ENCODE measurements at regions of chr19 and their contacts with region 1.

Region 1: DNA sequence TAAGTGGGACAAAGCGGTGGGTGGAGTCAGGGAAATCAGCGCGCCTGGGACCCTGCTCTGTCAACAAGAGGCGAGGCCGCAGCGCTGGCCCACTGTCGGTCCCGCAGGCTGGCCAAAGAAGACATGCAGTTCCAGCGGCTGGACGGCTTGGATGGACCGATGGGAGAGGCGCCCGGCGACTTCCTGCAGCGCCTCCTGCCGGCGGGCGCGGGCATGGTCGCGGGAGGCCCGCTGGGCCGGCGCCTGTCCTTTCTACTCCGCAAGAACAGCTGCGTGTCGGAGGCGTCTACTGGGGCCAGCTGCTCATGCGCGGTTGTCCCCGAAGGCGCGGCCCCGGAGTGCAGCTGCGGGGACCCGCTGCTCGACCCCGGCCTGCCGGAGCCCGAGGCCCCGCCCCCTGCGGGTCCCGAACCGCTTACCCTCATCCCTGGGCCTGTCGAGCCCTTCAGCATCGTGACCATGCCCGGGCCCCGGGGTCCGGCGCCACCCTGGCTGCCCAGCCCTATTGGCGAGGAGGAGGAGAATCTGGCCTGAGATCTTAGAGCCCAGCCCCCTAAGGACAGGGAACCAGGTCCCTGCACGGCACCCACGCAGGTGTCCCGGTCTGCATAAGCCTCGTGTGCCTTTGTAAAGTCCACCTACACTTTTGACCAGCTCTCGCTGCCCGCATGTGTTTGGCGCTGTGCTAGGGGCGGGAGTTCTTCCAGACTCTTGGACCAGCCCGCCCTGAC is 6.1 kb downstream of the BEST2 start:
- DNase-seq: peak; percentile 63
- H3K4me3 Mint-ChIP-seq: peak overlapping the region; percentile 32
- H3K27ac Mint-ChIP-seq: no peak overlapping the region
- H3K4me1 Mint-ChIP-seq: peaks cover 2% of the 10 kb centered on the region
- H3K27me3 Mint-ChIP-seq: peaks cover 17% of the 10 kb centered on the region

Region 2: DNA sequence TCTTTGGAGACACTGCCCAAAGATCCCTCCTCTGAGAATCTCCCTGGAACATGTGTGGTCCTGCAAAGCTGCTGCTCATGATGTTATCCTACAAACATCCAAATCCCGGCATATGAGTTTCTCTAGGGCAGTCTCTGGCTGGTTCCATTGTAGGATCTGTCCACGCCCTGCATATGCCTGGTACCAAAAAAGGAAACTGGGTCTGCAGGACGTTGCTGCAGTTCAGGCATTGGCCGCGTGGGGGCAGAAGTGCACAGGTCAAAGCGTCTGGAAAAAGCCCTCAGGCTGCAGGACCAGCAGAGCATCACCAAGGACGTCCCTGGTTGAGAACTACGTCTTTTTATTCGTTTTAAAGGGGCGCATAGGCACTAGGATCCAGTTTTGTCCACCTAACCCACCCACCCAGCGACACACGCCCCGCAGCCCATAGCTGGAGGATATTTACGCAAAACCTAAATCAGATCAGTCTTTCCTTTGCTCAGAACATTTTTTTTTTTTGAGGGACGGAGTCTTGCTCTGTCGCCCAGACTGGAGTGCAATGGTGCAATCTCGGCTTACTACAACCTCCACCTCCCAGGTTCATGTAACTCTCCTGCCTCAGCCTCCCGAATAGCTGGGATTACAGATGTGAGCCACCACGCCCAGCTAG is 193.6 kb before region 1 on chr19:
- CTCF ChIA-PET with region 1: interaction called, 5 read pairs
- intact Hi-C with region 1: loop called (anchors 2 kb)
- DNase-seq: peak; percentile 96
- H3K4me3 Mint-ChIP-seq: no peak overlapping the region
- H3K27ac Mint-ChIP-seq: no peak overlapping the region
- H3K4me1 Mint-ChIP-seq: peaks cover 4% of the 10 kb centered on the region
- H3K27me3 Mint-ChIP-seq: no peaks in the 10 kb centered on the region

Region 3: DNA sequence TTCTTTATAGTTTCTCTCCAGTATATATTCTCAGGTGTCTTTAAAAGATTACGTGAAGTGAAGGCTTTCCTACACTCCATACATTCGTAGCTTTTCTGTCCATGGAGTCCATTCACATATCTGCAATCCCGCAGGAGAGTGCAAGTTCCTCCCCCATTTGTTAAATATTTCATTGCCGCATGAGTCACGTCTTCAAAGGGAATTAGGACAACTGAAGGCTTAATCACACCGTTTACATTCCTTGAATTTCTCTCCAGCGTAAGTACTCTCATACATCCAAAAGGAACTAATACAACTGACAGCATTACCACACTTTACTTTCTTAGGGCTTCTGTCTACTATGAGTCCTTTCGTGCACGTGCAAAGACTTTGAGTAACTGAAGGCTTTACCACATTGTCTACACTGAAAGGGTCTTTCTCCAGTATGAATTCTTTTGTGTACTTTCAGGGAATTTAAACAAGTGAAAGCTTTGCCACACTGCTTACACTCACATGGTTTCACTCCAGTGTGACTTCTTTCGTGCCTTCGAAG is 177.5 kb before region 1 on chr19:
- CTCF ChIA-PET with region 1: no interaction called
- intact Hi-C with region 1: no loop called
- DNase-seq: no peak
- H3K4me3 Mint-ChIP-seq: no peak overlapping the region
- H3K27ac Mint-ChIP-seq: no peak overlapping the region
- H3K4me1 Mint-ChIP-seq: peaks cover under 1% of the 10 kb centered on the region
- H3K27me3 Mint-ChIP-seq: no peaks in the 10 kb centered on the region

Region 4: DNA sequence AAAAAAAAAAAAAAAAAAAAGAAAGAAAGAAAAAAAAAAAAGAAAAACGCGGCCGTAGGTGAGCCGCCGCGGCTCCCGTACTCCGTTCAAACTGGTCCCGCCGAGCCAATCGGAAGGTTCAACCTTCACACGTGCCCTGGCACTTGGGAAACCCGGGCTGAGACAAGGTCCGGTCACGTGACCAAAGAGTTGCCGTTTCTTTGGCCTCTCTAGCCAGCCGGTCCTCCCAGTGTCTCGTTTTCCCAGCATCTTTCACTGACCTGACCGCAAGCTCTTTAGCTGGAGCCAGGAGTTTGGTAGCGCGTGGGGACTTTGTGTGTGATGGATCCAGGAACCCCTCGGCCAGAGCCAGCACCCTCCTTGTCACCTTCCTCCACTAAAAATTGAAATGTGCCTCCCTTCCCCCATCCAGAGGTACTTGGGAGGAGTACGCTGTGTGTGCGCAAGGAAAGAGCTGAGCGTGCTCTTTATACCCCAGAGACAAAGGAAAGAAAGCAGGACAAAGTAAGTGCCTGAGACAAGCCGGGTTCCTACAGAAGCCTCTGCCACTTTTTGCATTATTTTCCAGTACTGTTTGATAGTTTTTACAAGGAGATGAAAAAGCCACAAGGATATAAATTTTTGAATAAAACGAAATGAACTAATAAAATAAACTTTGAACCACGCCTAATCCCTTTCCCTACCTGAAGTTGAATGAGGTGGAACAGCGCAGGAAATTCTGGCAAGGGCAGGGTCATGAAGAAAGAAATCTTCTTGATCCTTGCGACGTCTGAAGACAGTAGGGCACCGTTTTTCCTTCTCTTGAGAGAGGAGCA is 34.9 kb before region 1 on chr19:
- CTCF ChIA-PET with region 1: interaction called, 10 read pairs
- intact Hi-C with region 1: loop called (anchors 1 kb)
- DNase-seq: peak; percentile 97
- H3K4me3 Mint-ChIP-seq: peak overlapping the region; percentile 79
- H3K27ac Mint-ChIP-seq: peak overlapping the region; percentile 78
- H3K4me1 Mint-ChIP-seq: peaks cover 33% of the 10 kb centered on the region
- H3K27me3 Mint-ChIP-seq: no peaks in the 10 kb centered on the region

Region 5: DNA sequence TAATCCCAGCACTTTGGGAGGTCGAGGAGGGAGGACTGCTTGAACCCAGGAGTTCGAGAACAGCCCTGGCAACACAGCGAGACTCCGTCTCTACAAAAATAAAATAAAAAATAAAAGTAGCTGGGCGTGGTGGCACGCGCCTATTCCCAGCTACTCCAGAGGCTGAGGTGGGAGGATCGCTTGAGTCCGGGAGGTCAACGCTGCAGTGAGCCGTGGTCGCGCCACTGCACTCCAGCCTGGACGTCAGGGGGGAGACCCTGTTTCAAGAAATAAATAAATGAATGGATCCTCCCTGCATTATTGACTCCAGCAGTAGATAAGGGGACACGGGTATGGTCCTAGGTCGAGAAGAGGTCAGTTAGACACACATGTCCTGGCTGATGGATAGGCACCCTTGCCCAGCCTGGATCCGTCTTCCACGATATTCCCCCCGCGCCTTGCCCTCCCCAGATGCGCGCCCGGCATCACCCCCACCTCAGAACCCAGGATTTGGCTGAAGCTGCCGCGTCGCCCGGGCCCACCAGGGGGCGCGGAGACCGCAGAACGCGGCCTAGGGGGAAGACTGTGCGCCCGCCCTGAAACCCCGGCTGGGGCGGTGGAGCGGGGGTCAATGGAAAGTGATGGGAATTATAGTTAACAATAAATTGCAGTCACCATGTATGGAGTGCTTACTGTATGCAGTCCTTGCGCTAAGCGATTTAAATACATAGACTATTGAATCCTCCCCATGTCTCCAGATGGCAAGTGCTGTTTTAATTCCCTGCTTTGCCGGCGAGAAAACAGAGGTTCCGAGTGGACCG is 19.7 kb after region 1 on chr19:
- CTCF ChIA-PET with region 1: interaction called, 105 read pairs
- intact Hi-C with region 1: no loop called
- DNase-seq: peak; percentile 85
- H3K4me3 Mint-ChIP-seq: peak overlapping the region; percentile 72
- H3K27ac Mint-ChIP-seq: peak overlapping the region; percentile 82
- H3K4me1 Mint-ChIP-seq: peaks cover 30% of the 10 kb centered on the region
- H3K27me3 Mint-ChIP-seq: no peaks in the 10 kb centered on the region

Region 6: DNA sequence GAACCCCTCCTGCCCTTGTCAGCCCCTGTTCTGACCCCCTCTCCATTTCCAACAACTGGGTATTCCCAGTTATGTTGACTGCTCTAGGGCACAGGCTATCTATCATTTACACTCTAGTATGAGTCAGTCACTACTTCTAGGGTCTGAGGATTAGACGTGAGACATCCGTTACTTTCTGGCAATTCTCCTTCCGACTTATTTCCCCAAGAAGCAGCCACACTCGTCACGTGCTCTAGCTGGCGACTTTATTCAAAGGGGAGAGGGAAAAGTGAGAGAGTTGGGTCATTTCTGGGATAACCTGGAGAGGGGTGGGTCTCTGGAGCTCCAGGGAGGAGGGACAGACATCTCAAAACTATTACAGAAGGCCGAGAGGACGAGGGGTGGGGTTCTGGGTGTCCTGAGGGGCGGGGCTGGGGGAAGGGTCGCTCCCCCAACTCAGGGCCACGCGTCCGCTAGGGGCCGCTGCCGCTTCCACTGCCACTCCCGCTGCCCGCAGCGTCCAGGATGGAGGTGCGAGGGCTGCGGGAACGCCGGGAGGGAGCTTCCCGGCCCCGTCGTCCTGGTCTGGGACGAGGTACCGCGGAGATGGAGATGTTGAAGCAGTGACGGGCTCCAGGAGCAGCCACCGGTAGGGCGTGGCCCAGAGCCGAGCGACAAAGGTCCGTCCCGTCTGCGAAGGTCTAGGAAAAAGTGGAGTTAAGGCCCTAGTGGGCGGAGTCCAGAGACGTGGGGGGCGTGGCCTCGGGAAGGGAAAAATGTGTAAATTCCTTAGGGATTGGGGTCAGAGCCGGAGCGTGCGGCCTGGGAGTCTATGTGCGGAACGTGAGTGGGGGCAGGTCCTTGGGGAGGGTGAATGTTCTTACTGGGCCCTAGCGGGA is 67.8 kb after region 1 on chr19:
- CTCF ChIA-PET with region 1: interaction called, 10 read pairs
- intact Hi-C with region 1: no loop called
- DNase-seq: peak; percentile 41
- H3K4me3 Mint-ChIP-seq: no peak overlapping the region
- H3K27ac Mint-ChIP-seq: no peak overlapping the region
- H3K4me1 Mint-ChIP-seq: peaks cover 7% of the 10 kb centered on the region
- H3K27me3 Mint-ChIP-seq: peaks cover 40% of the 10 kb centered on the region

Measured in activated naive CD4-positive, alpha-beta T cell treated with anti-CD3 and anti-CD28 coated beads for 36 hours (primary cell).